GM10248 (cell line): ENCODE measurements at regions of chr1 and their contacts with region 1.

Region 1: GRCh38 chr1:245856944-245857531 is 650.0 kb downstream of the SMYD3 start:
- DNase-seq: no peak
- CTCF ChIP-seq: no peak

Region 2: DNA sequence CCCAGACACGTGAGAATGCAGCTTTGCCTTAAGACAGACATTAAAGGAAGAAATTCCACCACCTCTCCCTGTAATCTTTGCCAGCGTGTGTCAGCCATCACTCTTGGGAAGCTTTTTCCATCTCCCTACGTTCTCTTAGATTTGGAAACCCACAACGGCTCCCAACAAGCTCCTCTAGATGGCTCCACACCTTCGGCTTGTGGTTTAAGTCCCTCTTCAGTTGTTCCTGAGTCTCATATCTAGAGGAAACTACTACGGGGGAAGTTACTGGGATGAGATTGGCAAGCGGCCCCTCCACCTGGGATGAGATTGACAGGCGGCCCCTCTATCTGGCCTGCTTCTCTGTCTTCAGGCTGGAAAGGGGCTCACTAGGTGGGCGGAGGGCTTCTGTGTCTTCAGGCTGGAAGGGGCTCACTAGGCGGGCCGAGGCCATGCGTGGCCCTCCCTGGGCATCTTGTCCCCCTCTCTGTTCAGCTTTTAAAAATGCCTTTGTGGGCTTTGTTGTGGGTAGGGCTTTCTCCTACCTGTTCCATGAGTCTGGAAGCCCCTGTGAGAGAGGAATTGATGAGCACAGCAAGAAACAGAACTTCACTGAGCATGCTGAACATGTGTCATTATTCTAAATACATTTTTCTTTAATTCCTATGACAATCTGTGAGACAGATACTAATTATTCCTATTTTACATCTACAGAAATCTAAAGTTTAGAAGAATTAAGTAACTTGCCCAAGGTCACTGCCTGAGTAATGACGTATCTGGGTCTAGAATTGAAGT is 31.7 kb before region 1 on chr1:
- CTCF ChIA-PET with region 1: no interaction called
- POLR2A ChIA-PET with region 1: no interaction called
- DNase-seq: no peak
- CTCF ChIP-seq: no peak

Region 3: GRCh38 chr1:245869867-245870266 is 12.8 kb after region 1 on chr1:
- CTCF ChIA-PET with region 1: interaction called, 12 read pairs
- POLR2A ChIA-PET with region 1: no interaction called
- DNase-seq: no peak
- CTCF ChIP-seq: no peak